Dorsolateral prefrontal cortex (tissue), 120 donors: ENCODE measurements at regions of chr9 and their contacts with region 1.

Region 1: GRCh38 chr9:136545966-136546698 is at the start of gene NOTCH1:
- DNase-seq: peak; percentile 28 to 86 (median 74)
- H3K4me3 ChIP-seq: peak within 1 kb of the TSS; percentile 58 to 88 (median 76)
- H3K27ac ChIP-seq: peak within 1 kb of the TSS; percentile 69 to 98 (median 94)
- H3K27me3 ChIP-seq: peaks cover 0 to 17% (median 0%) of the 10 kb centered on the region in 45 donors
- CTCF ChIP-seq: peak in 10 of 56 donors; percentile 4 to 31 (median 10)
- total RNA-seq, gene NOTCH1: 24.0 to 92.1 (median 38.8) TPM

Region 2: DNA sequence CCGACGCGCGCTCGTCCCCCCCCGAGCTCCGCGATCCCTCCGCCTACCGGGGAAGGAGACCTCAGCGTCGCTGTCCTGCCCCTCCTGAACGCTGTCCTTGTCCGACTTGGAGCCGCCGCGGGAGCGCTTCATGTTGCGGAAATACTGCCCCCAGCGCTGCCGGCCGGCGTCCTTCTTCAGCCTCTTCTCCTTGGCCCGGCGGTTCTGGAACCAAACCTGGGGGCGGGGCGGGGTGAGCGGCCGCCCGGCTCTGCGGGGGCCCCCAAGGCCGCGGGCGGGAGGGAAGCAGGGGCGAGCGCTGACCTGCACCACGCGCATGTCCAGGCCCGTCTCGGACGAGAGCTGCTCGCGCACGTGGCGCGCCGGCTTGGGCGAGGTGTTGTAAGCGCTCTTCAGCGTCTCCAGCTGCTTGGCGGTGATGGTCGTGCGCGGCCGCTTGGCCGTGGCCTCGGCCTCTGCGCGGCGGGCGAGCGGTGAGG is 347.5 kb before region 1 on chr9:
- intact Hi-C with region 1: no loop called
- DNase-seq: peak in 1 of 10 donors; percentile 10
- H3K4me3 ChIP-seq: peak overlapping the region in 1 of 59 donors; percentile 6
- H3K27ac ChIP-seq: no peak overlapping the region
- H3K27me3 ChIP-seq: peaks cover 5 to 100% (median 97%) of the 10 kb centered on the region in 45 donors
- CTCF ChIP-seq: no peak

Region 3: GRCh38 chr9:136439550-136440408 is 106.4 kb before region 1 on chr9 and contains the start of gene INPP5E:
- intact Hi-C with region 1: no loop called
- DNase-seq: peak in 7 of 10 donors; percentile 22 to 87 (median 67)
- H3K4me3 ChIP-seq: peak within 1 kb of the TSS; percentile 66 to 95 (median 82)
- H3K27ac ChIP-seq: peak within 1 kb of the TSS in 47 of 59 donors; percentile 31 to 89 (median 65)
- H3K27me3 ChIP-seq: no peaks in the 10 kb centered on the region
- CTCF ChIP-seq: peak in 54 of 56 donors; percentile 25 to 93 (median 60)
- total RNA-seq, gene INPP5E: 16.7 to 35.7 (median 23.5) TPM

Region 4: GRCh38 chr9:136482793-136483588 is 63.1 kb before region 1 on chr9 and contains the start of gene SEC16A:
- intact Hi-C with region 1: loop called in 1 of 2 experiments (anchors 5 kb)
- DNase-seq: peak; percentile 98 to 100 (median 99)
- H3K4me3 ChIP-seq: peak within 1 kb of the TSS; percentile 72 to 100 (median 92)
- H3K27ac ChIP-seq: peak within 1 kb of the TSS; percentile 91 to 100 (median 99)
- H3K27me3 ChIP-seq: no peaks in the 10 kb centered on the region
- CTCF ChIP-seq: peak in 15 of 56 donors; percentile 11 to 42 (median 22)
- total RNA-seq, gene SEC16A: 52.6 to 89.0 (median 68.2) TPM

Region 5: GRCh38 chr9:136512651-136513071 is 33.5 kb before region 1 on chr9:
- intact Hi-C with region 1: loop called in 1 of 2 experiments (anchors 5 kb)
- DNase-seq: no peak
- H3K4me3 ChIP-seq: peak overlapping the region in 14 of 59 donors; percentile 1 to 44 (median 23)
- H3K27ac ChIP-seq: peak overlapping the region; percentile 61 to 98 (median 92)
- H3K27me3 ChIP-seq: no peaks in the 10 kb centered on the region
- CTCF ChIP-seq: no peak

Region 6: DNA sequence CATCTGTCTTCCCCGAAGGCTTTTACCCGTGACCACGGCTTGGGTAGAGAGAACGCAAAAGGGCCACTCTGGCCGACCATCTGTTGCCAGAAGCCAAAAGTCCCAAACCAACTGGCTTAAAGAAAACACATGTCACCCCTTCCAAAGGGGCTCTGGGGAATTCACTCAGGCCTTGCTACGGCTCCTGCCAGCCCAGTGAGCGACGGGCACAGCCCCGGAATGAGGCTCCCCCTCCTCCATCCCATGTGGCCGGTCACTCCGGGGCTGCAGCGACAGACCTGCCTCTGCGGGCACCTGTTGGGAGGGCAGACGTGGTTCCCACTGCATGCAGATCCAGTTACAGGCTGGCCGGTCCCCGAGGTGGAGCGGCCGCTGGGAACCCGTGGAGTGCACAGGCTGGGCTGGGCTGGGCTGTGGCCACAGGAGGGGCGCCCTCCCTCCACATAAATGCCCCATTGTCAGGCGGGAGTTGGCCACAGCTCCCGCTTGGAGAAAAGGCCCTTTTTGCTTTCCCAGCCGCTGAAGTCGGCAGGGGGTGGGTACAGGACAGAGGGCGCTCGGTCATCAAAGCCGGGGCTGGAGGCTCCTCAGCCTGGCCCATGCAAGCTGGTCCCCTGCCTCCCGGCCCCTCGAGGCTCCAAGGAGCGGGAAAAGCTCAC is 20.2 kb before region 1 on chr9:
- intact Hi-C with region 1: loop called (anchors 1 kb)
- DNase-seq: peak; percentile 42 to 95 (median 92)
- H3K4me3 ChIP-seq: peak overlapping the region in 44 of 59 donors; percentile 0 to 55 (median 26)
- H3K27ac ChIP-seq: peak overlapping the region; percentile 76 to 98 (median 93)
- H3K27me3 ChIP-seq: peaks cover 0 to 7% (median 0%) of the 10 kb centered on the region in 45 donors
- CTCF ChIP-seq: peak in 51 of 56 donors; percentile 13 to 71 (median 43)

Region 7: DNA sequence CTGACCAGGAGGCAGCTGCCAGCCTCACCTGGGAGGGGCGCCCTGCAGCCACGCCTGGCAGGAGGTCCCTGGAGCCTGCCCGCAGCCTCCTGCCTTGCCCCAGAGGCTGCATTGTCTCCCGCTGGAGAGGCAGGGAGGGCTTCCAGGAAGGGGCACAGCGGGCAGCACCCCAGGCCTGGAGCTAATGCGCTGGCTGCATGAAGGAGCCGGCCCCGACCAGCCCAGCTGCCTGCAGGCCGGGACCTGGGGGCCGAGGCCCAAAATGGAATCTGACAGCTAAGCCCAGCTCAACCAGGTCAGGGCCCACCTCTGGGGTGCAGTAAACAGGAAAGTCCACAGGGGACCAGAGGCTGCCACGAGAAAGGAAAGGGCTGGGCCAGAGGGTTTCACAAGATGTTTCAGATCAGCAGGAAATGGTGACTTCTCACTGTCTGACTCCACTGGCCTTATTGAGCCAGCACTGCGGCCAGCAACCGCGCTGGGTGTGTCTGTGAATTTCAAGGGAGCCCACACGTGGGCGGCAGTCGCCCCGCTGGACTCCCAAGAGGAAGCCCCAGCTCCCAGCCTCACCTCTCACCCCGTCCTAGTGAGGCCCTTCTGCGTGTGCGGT is 18.4 kb after region 1 on chr9:
- intact Hi-C with region 1: loop called in 1 of 2 experiments (anchors 2 kb)
- DNase-seq: peak in 1 of 10 donors; percentile 50
- H3K4me3 ChIP-seq: no peak overlapping the region
- H3K27ac ChIP-seq: peak overlapping the region in 44 of 59 donors; percentile 5 to 82 (median 54)
- H3K27me3 ChIP-seq: no peaks in the 10 kb centered on the region
- CTCF ChIP-seq: peak in 8 of 56 donors; percentile 7 to 26 (median 12)

Region 8: GRCh38 chr9:136599811-136600660 is 53.9 kb after region 1 on chr9:
- intact Hi-C with region 1: loop called (anchors 5 kb)
- DNase-seq: peak; percentile 20 to 90 (median 80)
- H3K4me3 ChIP-seq: peak overlapping the region in 5 of 59 donors; percentile 2 to 16 (median 10)
- H3K27ac ChIP-seq: peak overlapping the region in 46 of 59 donors; percentile 4 to 85 (median 58)
- H3K27me3 ChIP-seq: no peaks in the 10 kb centered on the region
- CTCF ChIP-seq: peak in 6 of 56 donors; percentile 14 to 34 (median 16)

Region 9: DNA sequence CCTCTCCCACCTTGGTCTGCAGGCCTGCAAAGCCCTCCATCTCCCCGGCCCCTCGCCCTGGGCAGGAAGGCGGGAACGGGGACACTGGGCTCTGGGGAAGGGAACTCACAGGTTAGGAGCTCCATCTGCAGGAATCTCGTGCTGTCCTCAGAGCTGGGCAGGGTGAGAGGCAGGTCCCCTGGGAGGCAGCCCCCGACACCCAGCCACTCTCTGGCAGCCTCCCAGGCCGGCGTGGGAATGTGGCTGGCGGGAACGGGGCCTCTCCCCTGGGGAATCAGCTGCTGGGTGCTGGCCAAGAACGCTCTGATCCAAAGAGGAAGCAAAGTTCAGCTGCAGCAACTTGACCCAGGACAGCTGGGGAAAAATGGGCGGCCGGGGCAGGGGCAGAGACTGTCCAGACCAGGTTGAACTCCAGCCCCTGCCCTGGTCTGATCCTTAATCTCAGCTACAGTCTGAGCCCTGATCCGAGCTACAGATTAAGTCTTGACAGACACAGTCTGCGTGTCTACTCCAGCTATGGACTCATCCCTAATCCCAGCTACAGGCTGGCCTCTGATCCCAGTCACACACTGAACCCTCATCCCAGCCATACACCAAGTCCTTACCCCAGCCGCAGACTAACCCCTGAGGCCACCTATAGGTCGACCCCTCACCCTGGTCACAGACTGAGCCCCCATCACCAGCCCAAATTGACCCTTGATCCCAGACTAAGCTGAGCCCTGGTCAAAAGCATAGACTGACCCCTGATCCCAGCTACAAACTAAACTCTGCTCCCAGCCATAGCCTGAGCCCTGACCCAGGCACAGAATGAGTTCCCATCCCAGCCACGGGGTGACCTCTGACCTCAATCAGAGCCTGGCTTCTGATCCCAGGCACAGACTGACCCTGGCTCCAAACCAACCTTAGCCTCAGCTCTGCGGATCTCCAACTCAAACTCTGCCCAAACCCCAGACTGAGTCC is 79.2 kb after region 1 on chr9:
- intact Hi-C with region 1: loop called in 1 of 2 experiments (anchors 2 kb)
- DNase-seq: peak in 6 of 10 donors; percentile 33 to 74 (median 50)
- H3K4me3 ChIP-seq: peak overlapping the region in 1 of 59 donors; percentile 28
- H3K27ac ChIP-seq: peak overlapping the region in 19 of 59 donors; percentile 3 to 73 (median 31)
- H3K27me3 ChIP-seq: no peaks in the 10 kb centered on the region
- CTCF ChIP-seq: peak in 55 of 56 donors; percentile 29 to 84 (median 67)

Region 10: DNA sequence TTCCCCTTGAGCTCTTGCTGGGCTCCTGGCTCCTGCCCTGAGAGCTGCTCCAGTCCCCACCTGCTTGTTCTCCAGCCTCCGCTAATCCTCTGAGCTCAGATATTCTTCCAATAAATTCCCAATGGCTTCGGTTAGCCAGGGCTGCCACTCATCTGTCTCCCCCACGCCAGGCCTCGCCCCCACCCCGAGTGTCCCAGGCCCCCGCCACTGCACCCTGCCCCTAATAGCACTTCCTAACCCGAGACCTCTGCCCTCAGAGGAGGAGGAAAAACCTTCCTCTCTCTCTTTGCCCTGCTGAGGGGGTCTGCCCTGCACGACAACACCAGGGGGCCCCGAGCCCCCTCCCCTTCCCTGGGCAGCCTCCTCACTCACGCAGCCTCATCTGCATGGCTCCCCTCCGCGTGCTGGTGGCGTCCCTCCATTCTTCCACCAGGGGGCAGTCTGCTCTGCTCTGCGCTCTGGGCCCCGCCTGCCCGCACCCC is 223.6 kb after region 1 on chr9:
- intact Hi-C with region 1: no loop called
- DNase-seq: peak in 4 of 10 donors; percentile 35 to 54 (median 44)
- H3K4me3 ChIP-seq: peak overlapping the region in 37 of 59 donors; percentile 21 to 64 (median 38)
- H3K27ac ChIP-seq: peak overlapping the region in 1 of 59 donors; percentile 25
- H3K27me3 ChIP-seq: no peaks in the 10 kb centered on the region
- CTCF ChIP-seq: peak in 53 of 56 donors; percentile 22 to 61 (median 45)